Panc1 (cell line): ENCODE measurements at regions of chr12 and their contacts with region 1.

Region 1: GRCh38 chr12:72647139-72647538 is 375.0 kb downstream of the TRHDE start:
- DNase-seq: no peak
- ATAC-seq: no peak
- H3K4me3 ChIP-seq: no peak overlapping the region
- H3K27ac ChIP-seq: no peak overlapping the region
- H3K4me1 ChIP-seq: no peaks in the 10 kb centered on the region
- H3K27me3 ChIP-seq: no peaks in the 10 kb centered on the region
- CTCF ChIP-seq: no peak

Region 2: GRCh38 chr12:72472350-72472749 is 174.8 kb before region 1 on chr12:
- CTCF ChIA-PET with region 1: no interaction called
- POLR2A ChIA-PET with region 1: no interaction called
- in situ Hi-C with region 1: no loop called
- intact Hi-C with region 1: no loop called
- DNase-seq: no peak
- ATAC-seq: no peak
- H3K4me3 ChIP-seq: no peak overlapping the region
- H3K27ac ChIP-seq: no peak overlapping the region
- H3K4me1 ChIP-seq: no peaks in the 10 kb centered on the region
- H3K27me3 ChIP-seq: no peaks in the 10 kb centered on the region
- CTCF ChIP-seq: peak; percentile 13; the same call in 1 of the 2 replicates

Region 3: GRCh38 chr12:72610854-72611358 is 36.2 kb before region 1 on chr12:
- CTCF ChIA-PET with region 1: no interaction called
- POLR2A ChIA-PET with region 1: no interaction called
- in situ Hi-C with region 1: no loop called
- intact Hi-C with region 1: loop called (anchors 1 kb)
- DNase-seq: no peak
- ATAC-seq: no peak
- H3K4me3 ChIP-seq: no peak overlapping the region
- H3K27ac ChIP-seq: no peak overlapping the region
- H3K4me1 ChIP-seq: no peaks in the 10 kb centered on the region
- H3K27me3 ChIP-seq: no peaks in the 10 kb centered on the region
- CTCF ChIP-seq: no peak